Sigmoid colon (tissue), 7 donors: ENCODE measurements at regions of chr15 and their contacts with region 1.

Region 1: GRCh38 chr15:60358935-60359682 is 38.7 kb downstream of the ANXA2 start:
- DNase-seq: no peak
- H3K4me3 ChIP-seq: no peak overlapping the region
- H3K27ac ChIP-seq: peak overlapping the region; percentile 45 to 72 (median 60)
- H3K4me1 ChIP-seq: peaks cover 0 to 34% (median 33%) of the 10 kb centered on the region in 4 donors
- H3K27me3 ChIP-seq: no peaks in the 10 kb centered on the region
- CTCF ChIP-seq: no peak
- EP300 ChIP-seq: no peak
- POLR2A ChIP-seq: no peak

Region 2: GRCh38 chr15:60299452-60300047 is 59.6 kb before region 1 on chr15:
- intact Hi-C with region 1: no loop called
- DNase-seq: no peak
- H3K4me3 ChIP-seq: no peak overlapping the region
- H3K27ac ChIP-seq: no peak overlapping the region
- H3K4me1 ChIP-seq: peaks cover 0 to 7% (median 3%) of the 10 kb centered on the region in 4 donors
- H3K27me3 ChIP-seq: no peaks in the 10 kb centered on the region
- CTCF ChIP-seq: no peak
- EP300 ChIP-seq: no peak
- POLR2A ChIP-seq: no peak

Region 3: GRCh38 chr15:60397772-60398445 is 38.8 kb after region 1 on chr15 and contains the start of gene ANXA2:
- intact Hi-C with region 1: loop called (anchors 5 kb)
- DNase-seq: peak; percentile 95
- H3K4me3 ChIP-seq: peak within 1 kb of the TSS; percentile 78 to 99 (median 96)
- H3K27ac ChIP-seq: peak within 1 kb of the TSS; percentile 95 to 99 (median 98)
- H3K4me1 ChIP-seq: peaks cover 3 to 46% (median 38%) of the 10 kb centered on the region in 4 donors
- H3K27me3 ChIP-seq: no peaks in the 10 kb centered on the region
- CTCF ChIP-seq: no peak
- EP300 ChIP-seq: no peak
- POLR2A ChIP-seq: peak; percentile 50 to 81
- total RNA-seq, gene ANXA2: 157 to 366 (median 214) TPM

Region 4: GRCh38 chr15:60444289-60444912 is 85.3 kb after region 1 on chr15:
- intact Hi-C with region 1: loop called (anchors 1 kb)
- DNase-seq: no peak
- H3K4me3 ChIP-seq: no peak overlapping the region
- H3K27ac ChIP-seq: no peak overlapping the region
- H3K4me1 ChIP-seq: no peaks in the 10 kb centered on the region
- H3K27me3 ChIP-seq: no peaks in the 10 kb centered on the region
- CTCF ChIP-seq: peak in 1 of 4 experiments; percentile 59
- EP300 ChIP-seq: no peak
- POLR2A ChIP-seq: no peak

Region 5: DNA sequence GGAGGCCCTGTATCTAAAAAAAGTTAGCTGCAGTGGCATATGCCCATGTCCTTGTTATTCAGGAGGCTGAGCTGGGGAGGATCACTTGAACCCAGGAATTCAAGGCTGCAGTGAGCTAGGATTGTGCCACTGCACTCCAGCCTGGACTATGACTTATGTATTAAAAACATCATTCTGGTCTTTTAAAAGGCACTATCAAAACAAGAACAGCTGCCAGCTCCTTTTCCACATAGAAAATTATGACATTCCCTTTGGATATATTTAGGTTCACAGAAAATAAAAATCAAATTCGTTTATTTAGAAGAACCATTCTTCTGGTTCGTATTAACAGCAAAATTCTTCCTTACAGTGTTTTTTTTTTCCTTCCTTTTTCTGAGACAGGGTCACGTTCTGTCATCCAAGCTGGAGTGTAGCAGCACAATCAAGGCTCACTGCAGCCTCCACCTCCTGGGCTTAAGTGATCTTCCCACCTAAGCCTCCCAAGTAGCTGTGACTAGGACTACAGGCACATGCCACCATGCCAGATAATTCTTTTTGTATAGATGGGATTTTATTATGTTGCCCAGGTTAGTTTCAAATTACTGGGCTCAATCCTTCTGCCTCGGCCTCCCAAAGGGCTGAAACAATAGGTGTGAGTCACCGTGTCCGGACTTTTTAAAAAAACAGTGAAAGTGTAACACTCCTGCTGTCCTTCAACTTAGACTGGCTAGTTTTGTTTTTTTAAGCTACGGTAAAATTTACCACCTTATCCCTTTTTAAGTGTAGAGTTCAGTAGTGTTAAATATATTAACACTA is 105.9 kb after region 1 on chr15:
- intact Hi-C with region 1: no loop called
- DNase-seq: no peak
- H3K4me3 ChIP-seq: no peak overlapping the region
- H3K27ac ChIP-seq: no peak overlapping the region
- H3K4me1 ChIP-seq: no peaks in the 10 kb centered on the region
- H3K27me3 ChIP-seq: no peaks in the 10 kb centered on the region
- CTCF ChIP-seq: no peak
- EP300 ChIP-seq: no peak
- POLR2A ChIP-seq: no peak

Region 6: GRCh38 chr15:60520825-60521368 is 161.8 kb after region 1 on chr15:
- intact Hi-C with region 1: loop called (anchors 5 kb)
- DNase-seq: no peak
- H3K4me3 ChIP-seq: no peak overlapping the region
- H3K27ac ChIP-seq: no peak overlapping the region
- H3K4me1 ChIP-seq: no peaks in the 10 kb centered on the region
- H3K27me3 ChIP-seq: no peaks in the 10 kb centered on the region
- CTCF ChIP-seq: peak; percentile 36 to 85 (median 62)
- EP300 ChIP-seq: no peak
- POLR2A ChIP-seq: no peak